ENCODE measurements at regions of chr14 and their contacts with region 1.

Region 1: DNA sequence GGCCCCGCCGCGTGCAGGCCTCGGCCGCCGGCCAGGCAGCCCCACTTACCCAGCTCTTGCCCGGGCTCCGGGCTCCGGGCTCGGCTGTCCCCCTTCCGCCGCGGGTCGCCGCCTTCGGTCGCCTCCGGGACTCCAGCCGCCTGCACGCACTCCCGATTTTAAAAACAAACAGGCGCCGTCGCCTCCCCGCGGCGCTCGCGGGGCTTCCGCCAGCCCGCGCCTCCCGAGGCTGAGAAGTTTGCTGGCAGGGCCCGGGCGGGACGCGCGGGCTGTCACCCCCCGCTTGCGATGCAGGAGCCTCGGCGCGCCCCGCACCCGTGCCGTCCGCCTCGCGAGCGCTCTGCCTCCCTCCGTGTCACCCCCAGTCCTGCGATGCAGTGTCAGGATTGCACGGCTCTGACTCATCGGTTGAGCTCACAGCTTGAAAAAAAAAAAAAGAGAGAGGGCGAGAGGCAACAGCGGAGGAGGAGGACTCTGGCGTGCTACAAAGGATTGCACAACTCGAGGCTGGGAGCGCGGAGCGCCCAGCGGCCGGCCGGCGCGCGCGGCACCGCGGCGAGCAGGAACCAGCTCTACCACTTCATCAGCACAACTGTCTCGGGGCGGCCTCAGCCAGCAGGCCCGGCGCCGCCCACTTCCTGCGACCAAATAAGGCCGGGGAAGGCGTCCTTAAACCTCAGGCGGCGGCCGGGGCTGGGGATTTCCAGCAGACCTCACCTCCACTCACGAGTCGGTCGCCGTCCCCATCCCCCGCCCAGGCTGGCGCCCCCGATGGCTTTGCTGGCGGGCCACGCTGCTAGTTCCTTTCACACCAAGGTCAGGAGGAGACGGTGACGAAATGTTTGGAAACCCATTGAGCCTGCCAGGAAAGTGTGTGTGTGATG is 45.8 kb upstream of the PNMA1 start:
- DNase-seq: peak; percentile 99
- ATAC-seq: peak; percentile 75
- H3K4me3 Mint-ChIP-seq: peak overlapping the region; percentile 87
- H3K27ac Mint-ChIP-seq: peak overlapping the region; percentile 96
- H3K4me1 Mint-ChIP-seq: peaks cover 72% of the 10 kb centered on the region
- H3K27me3 Mint-ChIP-seq: no peaks in the 10 kb centered on the region
- CTCF ChIP-seq: no peak

Region 2: GRCh38 chr14:73696466-73697400 is 63.2 kb before region 1 on chr14:
- CTCF ChIA-PET with region 1: no interaction called
- POLR2A ChIA-PET with region 1: no interaction called
- intact Hi-C with region 1: no loop called
- DNase-seq: peak; percentile 29
- ATAC-seq: peak; percentile 91
- H3K4me3 Mint-ChIP-seq: peak overlapping the region; percentile 47
- H3K27ac Mint-ChIP-seq: peak overlapping the region; percentile 94
- H3K4me1 Mint-ChIP-seq: peaks cover 30% of the 10 kb centered on the region
- H3K27me3 Mint-ChIP-seq: no peaks in the 10 kb centered on the region
- CTCF ChIP-seq: no peak

Region 3: GRCh38 chr14:73713803-73714655 is 45.9 kb before region 1 on chr14 and contains the start of gene PNMA1:
- CTCF ChIA-PET with region 1: interaction called, 3 read pairs
- POLR2A ChIA-PET with region 1: interaction called, 25 read pairs
- intact Hi-C with region 1: no loop called
- DNase-seq: peak; percentile 89
- ATAC-seq: peak; percentile 81
- H3K4me3 Mint-ChIP-seq: peak within 1 kb of the TSS; percentile 93
- H3K27ac Mint-ChIP-seq: peak within 1 kb of the TSS; percentile 98
- H3K4me1 Mint-ChIP-seq: peaks cover 18% of the 10 kb centered on the region
- H3K27me3 Mint-ChIP-seq: no peaks in the 10 kb centered on the region
- CTCF ChIP-seq: no peak
- total RNA-seq, gene PNMA1: 22.9 to 24.1 TPM

Region 4: GRCh38 chr14:73771848-73772638 is 12.1 kb after region 1 on chr14:
- CTCF ChIA-PET with region 1: interaction called, 19 read pairs
- POLR2A ChIA-PET with region 1: interaction called, 512 read pairs
- intact Hi-C with region 1: no loop called
- DNase-seq: peak; percentile 96
- ATAC-seq: peak; percentile 81
- H3K4me3 Mint-ChIP-seq: peak overlapping the region; percentile 41
- H3K27ac Mint-ChIP-seq: peak overlapping the region; percentile 92
- H3K4me1 Mint-ChIP-seq: peaks cover 73% of the 10 kb centered on the region
- H3K27me3 Mint-ChIP-seq: no peaks in the 10 kb centered on the region
- CTCF ChIP-seq: no peak

Region 5: DNA sequence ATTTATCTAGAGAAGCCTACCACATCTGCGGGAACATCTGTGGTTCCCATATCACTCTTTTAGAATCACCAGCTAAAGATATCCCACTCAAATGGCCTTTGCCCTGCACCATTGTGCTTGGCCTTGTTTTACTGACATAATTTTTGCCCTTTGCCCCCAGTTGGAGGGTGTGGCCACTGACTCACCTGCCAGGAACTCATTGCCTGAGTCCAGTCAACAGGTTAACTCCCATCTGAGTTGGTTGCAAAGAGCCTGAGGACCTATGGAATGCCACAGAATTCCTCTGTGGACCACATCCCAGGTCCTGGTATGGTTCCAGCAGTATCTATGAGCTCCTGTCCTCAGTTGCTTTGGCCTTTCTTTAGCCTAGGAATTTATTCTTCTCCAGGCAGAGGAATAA is 36.0 kb after region 1 on chr14:
- CTCF ChIA-PET with region 1: interaction called, 3 read pairs
- POLR2A ChIA-PET with region 1: interaction called, 10 read pairs
- intact Hi-C with region 1: no loop called
- DNase-seq: no peak
- ATAC-seq: no peak
- H3K4me3 Mint-ChIP-seq: no peak overlapping the region
- H3K27ac Mint-ChIP-seq: no peak overlapping the region
- H3K4me1 Mint-ChIP-seq: peaks cover 2% of the 10 kb centered on the region
- H3K27me3 Mint-ChIP-seq: no peaks in the 10 kb centered on the region
- CTCF ChIP-seq: no peak

Region 6: GRCh38 chr14:73851644-73852382 is 91.9 kb after region 1 on chr14 and contains the start of gene PTGR2:
- CTCF ChIA-PET with region 1: interaction called, 3 read pairs
- POLR2A ChIA-PET with region 1: interaction called, 10 read pairs
- intact Hi-C with region 1: no loop called
- DNase-seq: peak; percentile 94
- ATAC-seq: peak; percentile 98
- H3K4me3 Mint-ChIP-seq: peak within 1 kb of the TSS; percentile 87
- H3K27ac Mint-ChIP-seq: peak within 1 kb of the TSS; percentile 99
- H3K4me1 Mint-ChIP-seq: peaks cover 15% of the 10 kb centered on the region
- H3K27me3 Mint-ChIP-seq: no peaks in the 10 kb centered on the region
- CTCF ChIP-seq: no peak
- total RNA-seq, gene PTGR2: 10.6 to 11.0 TPM